OCI-LY7 (cell line): ENCODE measurements at regions of chr10 and their contacts with region 1.

Region 1: GRCh38 chr10:5840314-5841307 is 27.4 kb upstream of the GDI2 start:
- DNase-seq: peak; percentile 98
- H3K4me3 ChIP-seq: peak overlapping the region; percentile 65
- H3K27ac ChIP-seq: peak overlapping the region; percentile 98
- H3K4me1 ChIP-seq: peaks cover 64% of the 10 kb centered on the region
- CTCF ChIP-seq: no peak

Region 2: DNA sequence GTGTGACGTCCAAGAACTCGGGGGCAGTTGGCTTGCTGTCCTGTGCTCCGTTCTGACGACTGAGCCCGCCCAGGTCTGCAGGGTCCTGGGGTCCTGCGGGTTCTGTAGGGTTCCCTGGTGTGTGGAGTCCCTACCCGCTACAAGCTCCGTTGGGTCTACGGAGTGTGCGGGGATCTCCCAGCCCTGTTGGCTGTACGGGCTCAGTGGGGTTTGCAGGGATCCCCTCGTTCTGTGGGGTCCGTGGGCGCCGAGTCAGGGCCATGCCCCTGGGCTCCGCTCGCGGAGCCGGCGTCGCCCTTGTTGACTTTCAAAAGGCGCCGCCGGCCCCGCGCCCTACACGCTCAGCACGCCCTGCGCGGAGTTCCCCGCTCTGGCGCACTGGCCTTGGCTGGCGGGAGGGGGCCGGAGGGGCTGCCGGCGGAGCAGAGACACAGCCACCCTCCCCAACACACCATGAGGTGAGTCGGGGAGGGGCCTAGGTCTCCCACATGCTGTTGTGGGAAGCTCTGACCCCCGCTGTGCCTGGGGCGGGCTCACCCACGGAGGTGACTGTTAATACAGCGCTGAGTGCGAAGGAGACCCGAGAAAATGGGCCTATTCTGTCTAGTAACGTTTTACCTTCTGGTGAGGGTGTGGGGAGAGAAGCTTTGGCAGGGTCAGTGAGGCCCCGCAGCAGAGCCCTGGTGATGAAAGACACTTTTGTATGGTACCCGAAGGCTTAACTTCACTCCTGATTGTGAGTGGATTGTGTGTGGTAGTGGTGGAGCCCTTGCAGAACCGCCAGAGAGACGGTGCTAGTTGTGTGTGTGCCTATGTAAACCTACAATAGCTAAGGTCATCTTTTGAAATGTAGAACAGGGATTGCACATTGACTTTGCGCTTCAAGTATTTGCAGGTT is 147.9 kb before region 1 on chr10:
- CTCF ChIA-PET with region 1: no interaction called
- POLR2A ChIA-PET with region 1: interaction called, 22 read pairs
- intact Hi-C with region 1: loop called (anchors 1 kb)
- DNase-seq: peak; percentile 87
- H3K4me3 ChIP-seq: peak overlapping the region; percentile 70
- H3K27ac ChIP-seq: peak overlapping the region; percentile 92
- H3K4me1 ChIP-seq: peaks cover 91% of the 10 kb centered on the region
- CTCF ChIP-seq: no peak

Region 3: GRCh38 chr10:5813287-5814109 is 27.1 kb before region 1 on chr10 and contains the start of gene GDI2:
- CTCF ChIA-PET with region 1: no interaction called
- POLR2A ChIA-PET with region 1: interaction called, 144 read pairs
- intact Hi-C with region 1: loop called (anchors 1 kb)
- DNase-seq: peak; percentile 99
- H3K4me3 ChIP-seq: peak within 1 kb of the TSS; percentile 94
- H3K27ac ChIP-seq: peak within 1 kb of the TSS; percentile 85
- H3K4me1 ChIP-seq: peaks cover 65% of the 10 kb centered on the region
- CTCF ChIP-seq: no peak
- total RNA-seq, gene GDI2: 265 and 270 TPM in 2 replicates

Region 4: GRCh38 chr10:5854106-5854570 is 13.5 kb after region 1 on chr10:
- CTCF ChIA-PET with region 1: interaction called, 4 read pairs
- POLR2A ChIA-PET with region 1: interaction called, 40 read pairs
- intact Hi-C with region 1: no loop called
- DNase-seq: no peak
- H3K4me3 ChIP-seq: no peak overlapping the region
- H3K27ac ChIP-seq: no peak overlapping the region
- H3K4me1 ChIP-seq: peaks cover 22% of the 10 kb centered on the region
- CTCF ChIP-seq: no peak

Region 5: DNA sequence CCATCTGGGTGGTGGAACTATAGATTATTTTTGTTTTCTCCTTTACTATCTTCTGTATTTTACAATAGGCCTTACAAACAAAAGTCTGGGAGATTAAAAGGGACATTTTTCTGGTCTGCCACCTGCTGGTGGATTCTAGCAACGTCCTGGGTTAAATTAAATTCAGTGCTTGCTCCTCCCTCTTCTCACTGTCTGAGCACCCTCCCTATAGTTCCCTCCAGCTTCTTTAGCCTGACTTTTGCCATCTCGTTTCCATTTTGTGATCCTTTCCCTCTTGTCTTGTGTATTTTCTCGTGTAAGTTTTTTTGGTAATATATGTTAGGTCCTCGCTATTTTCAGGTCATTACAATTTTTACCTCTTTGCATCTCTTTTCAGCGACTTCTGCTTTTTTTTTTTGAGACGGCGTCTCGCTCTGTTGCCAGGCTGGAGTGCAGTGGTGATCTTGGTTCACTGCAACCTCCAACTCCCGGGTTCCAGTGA is 32.9 kb after region 1 on chr10:
- CTCF ChIA-PET with region 1: interaction called, 3 read pairs
- POLR2A ChIA-PET with region 1: interaction called, 6 read pairs
- intact Hi-C with region 1: loop called (anchors 1 kb)
- DNase-seq: peak; percentile 79
- H3K4me3 ChIP-seq: no peak overlapping the region
- H3K27ac ChIP-seq: no peak overlapping the region
- H3K4me1 ChIP-seq: peaks cover 10% of the 10 kb centered on the region
- CTCF ChIP-seq: peak; percentile 86

Region 6: GRCh38 chr10:6050801-6051445 is 210.3 kb after region 1 on chr10:
- CTCF ChIA-PET with region 1: no interaction called
- POLR2A ChIA-PET with region 1: no interaction called
- intact Hi-C with region 1: loop called (anchors 5 kb)
- DNase-seq: peak; percentile 90
- H3K4me3 ChIP-seq: peak overlapping the region; percentile 63
- H3K27ac ChIP-seq: peak overlapping the region; percentile 94
- H3K4me1 ChIP-seq: peaks cover 92% of the 10 kb centered on the region
- CTCF ChIP-seq: peak; percentile 78

Region 7: GRCh38 chr10:6239213-6239991 is 398.8 kb after region 1 on chr10:
- CTCF ChIA-PET with region 1: no interaction called
- POLR2A ChIA-PET with region 1: no interaction called
- intact Hi-C with region 1: no loop called
- DNase-seq: peak; percentile 9
- H3K4me3 ChIP-seq: no peak overlapping the region
- H3K27ac ChIP-seq: no peak overlapping the region
- H3K4me1 ChIP-seq: peaks cover 4% of the 10 kb centered on the region
- CTCF ChIP-seq: no peak

Region 8: DNA sequence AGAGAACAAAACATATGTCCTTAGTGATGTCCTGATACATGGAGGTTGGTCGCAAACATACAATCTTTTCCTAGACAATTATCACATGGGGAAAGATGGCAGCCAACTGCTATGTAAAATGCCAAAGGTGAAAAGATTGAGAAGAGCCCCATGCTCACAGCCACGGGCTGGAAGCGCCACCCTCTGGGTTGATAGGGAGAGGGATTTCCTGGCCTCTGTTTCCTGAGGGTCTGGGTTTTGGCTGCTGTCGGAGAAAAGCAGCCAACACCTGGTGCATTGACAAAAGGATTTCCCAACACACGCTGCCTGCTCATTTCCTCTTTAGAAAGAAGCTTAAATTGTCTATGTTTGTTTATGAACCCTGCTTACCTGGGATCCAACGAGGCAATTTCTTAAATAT is 1782.4 kb after region 1 on chr10:
- CTCF ChIA-PET with region 1: no interaction called
- POLR2A ChIA-PET with region 1: no interaction called
- intact Hi-C with region 1: no loop called
- DNase-seq: no peak
- H3K4me3 ChIP-seq: no peak overlapping the region
- H3K27ac ChIP-seq: no peak overlapping the region
- H3K4me1 ChIP-seq: peaks cover 7% of the 10 kb centered on the region
- CTCF ChIP-seq: peak; percentile 45; the same call in 1 of the 2 replicates